K562 (cell line): ENCODE measurements at regions of chr13 and their contacts with region 1.

Region 1: DNA sequence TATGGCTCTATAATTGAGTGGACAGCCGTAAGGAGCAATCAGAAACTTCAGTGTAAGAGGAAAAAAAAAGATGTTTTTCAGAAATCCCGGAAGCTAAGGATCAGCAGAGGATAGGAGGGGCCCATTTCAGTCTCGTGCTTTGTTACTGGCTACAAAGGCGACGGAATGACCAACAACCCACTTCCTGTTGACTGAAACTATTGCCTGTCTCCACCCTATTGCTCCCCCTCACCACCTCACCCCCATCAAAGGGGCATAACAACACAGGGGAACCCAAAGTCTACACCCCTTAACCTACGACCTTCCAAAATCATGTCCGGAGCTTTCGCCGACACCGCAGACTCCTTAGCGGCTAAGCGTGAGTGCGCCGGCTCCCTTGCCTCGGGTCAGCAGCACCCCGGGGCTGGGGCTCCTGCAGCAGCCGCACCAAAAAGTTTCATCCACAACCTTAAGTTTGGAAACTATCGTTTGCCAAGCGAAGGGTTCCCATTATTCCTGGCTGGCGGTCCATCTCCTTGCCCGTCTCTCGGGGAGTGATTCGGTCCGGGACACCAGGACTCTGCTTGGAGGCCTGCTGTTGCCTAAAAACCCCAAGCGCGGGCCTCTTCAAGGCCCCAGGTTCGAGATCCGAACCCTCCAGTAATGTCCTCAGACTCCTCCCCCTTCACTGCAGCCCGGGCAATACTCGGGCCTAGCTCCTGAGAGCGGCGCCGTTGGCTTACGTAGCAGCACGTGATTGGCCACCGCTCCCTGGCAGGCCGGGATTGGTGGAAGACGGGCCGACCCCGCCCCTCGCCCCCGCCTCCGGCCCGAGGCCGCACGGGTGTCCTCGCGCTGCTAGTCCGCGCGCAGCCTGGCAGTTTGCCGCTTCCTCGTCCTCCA is at the start of gene TPP2:
- DNase-seq: peak; percentile 96 to 99 (median 99)
- ATAC-seq: peak; percentile 86
- H3K4me3 ChIP-seq: peak within 1 kb of the TSS; percentile 89
- H3K27ac ChIP-seq: peak within 1 kb of the TSS; percentile 96
- H3K4me1 ChIP-seq: peaks cover 11 to 17% of the 10 kb centered on the region in 2 experiments
- H3K27me3 ChIP-seq: no peaks in the 10 kb centered on the region
- CTCF ChIP-seq: no peak
- EP300 ChIP-seq: 0 out of 2 replicates have a peak, but pooled peaks have one; percentile 4
- POLR2A ChIP-seq: peak; percentile 86
- RAD21 ChIP-seq: no peak
- polyA plus RNA-seq, gene TPP2: 18.8 to 25.8 TPM

Region 2: GRCh38 chr13:102071711-102072110 is 524.7 kb before region 1 on chr13:
- CTCF ChIA-PET with region 1: no interaction called
- POLR2A ChIA-PET with region 1: no interaction called
- in situ Hi-C with region 1: no loop called
- intact Hi-C with region 1: no loop called
- DNase-seq: no peak
- ATAC-seq: no peak
- H3K4me3 ChIP-seq: no peak overlapping the region
- H3K27ac ChIP-seq: no peak overlapping the region
- H3K4me1 ChIP-seq: no peaks in the 10 kb centered on the region
- H3K27me3 ChIP-seq: no peaks in the 10 kb centered on the region
- CTCF ChIP-seq: no peak
- EP300 ChIP-seq: no peak
- POLR2A ChIP-seq: no peak
- RAD21 ChIP-seq: no peak

Region 3: GRCh38 chr13:102236830-102237229 is 359.6 kb before region 1 on chr13:
- CTCF ChIA-PET with region 1: no interaction called
- POLR2A ChIA-PET with region 1: no interaction called
- in situ Hi-C with region 1: no loop called
- intact Hi-C with region 1: no loop called
- DNase-seq: no peak
- ATAC-seq: no peak
- H3K4me3 ChIP-seq: no peak overlapping the region
- H3K27ac ChIP-seq: no peak overlapping the region
- H3K4me1 ChIP-seq: no peaks in the 10 kb centered on the region
- H3K27me3 ChIP-seq: no peaks in the 10 kb centered on the region
- CTCF ChIP-seq: no peak
- EP300 ChIP-seq: no peak
- POLR2A ChIP-seq: no peak
- RAD21 ChIP-seq: no peak

Region 4: DNA sequence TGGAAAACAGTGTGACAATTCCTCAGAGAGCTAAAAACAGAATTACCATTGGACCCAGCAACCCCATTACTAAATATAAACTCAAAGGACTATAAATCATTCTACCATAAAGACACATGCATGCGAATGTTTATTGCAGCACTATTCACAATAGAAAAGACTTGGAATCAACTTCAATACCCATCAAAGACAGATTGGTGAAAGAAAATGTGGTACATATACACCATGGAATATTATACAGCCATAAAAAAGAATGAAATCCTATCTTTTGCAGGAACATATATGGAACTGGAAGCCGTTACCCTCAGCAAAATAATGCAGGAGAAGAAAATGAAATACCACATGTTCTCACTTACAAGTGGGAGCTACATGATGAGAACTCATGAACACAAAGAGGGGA is 173.7 kb before region 1 on chr13:
- CTCF ChIA-PET with region 1: no interaction called
- POLR2A ChIA-PET with region 1: no interaction called
- in situ Hi-C with region 1: no loop called
- intact Hi-C with region 1: no loop called
- DNase-seq: no peak
- ATAC-seq: no peak
- H3K4me3 ChIP-seq: no peak overlapping the region
- H3K27ac ChIP-seq: no peak overlapping the region
- H3K4me1 ChIP-seq: no peaks in the 10 kb centered on the region
- H3K27me3 ChIP-seq: no peaks in the 10 kb centered on the region
- CTCF ChIP-seq: no peak
- EP300 ChIP-seq: no peak
- POLR2A ChIP-seq: no peak
- RAD21 ChIP-seq: no peak

Region 5: GRCh38 chr13:102609696-102610095 is 13.3 kb after region 1 on chr13:
- CTCF ChIA-PET with region 1: no interaction called
- POLR2A ChIA-PET with region 1: interaction called, 21 read pairs
- in situ Hi-C with region 1: no loop called
- intact Hi-C with region 1: no loop called
- DNase-seq: no peak
- ATAC-seq: no peak
- H3K4me3 ChIP-seq: no peak overlapping the region
- H3K27ac ChIP-seq: no peak overlapping the region
- H3K4me1 ChIP-seq: peaks cover 4 to 23% of the 10 kb centered on the region in 2 experiments
- H3K27me3 ChIP-seq: no peaks in the 10 kb centered on the region
- CTCF ChIP-seq: no peak
- EP300 ChIP-seq: no peak
- POLR2A ChIP-seq: no peak
- RAD21 ChIP-seq: no peak

Region 6: GRCh38 chr13:102773441-102774215 is 177.2 kb after region 1 on chr13 and contains the start of gene TEX30:
- CTCF ChIA-PET with region 1: no interaction called
- POLR2A ChIA-PET with region 1: interaction called, 3 read pairs
- in situ Hi-C with region 1: no loop called
- intact Hi-C with region 1: loop called (anchors 2 kb)
- DNase-seq: peak; percentile 83 to 85 (median 84)
- ATAC-seq: peak; percentile 95
- H3K4me3 ChIP-seq: peak within 1 kb of the TSS; percentile 86
- H3K27ac ChIP-seq: peak within 1 kb of the TSS; percentile 88
- H3K4me1 ChIP-seq: peaks cover 13 to 26% of the 10 kb centered on the region in 2 experiments; a peak in 4 of 5 replicates
- H3K27me3 ChIP-seq: no peaks in the 10 kb centered on the region
- CTCF ChIP-seq: no peak
- EP300 ChIP-seq: no peak
- POLR2A ChIP-seq: peak; percentile 84
- RAD21 ChIP-seq: no peak
- polyA plus RNA-seq, gene TEX30: 109 to 143 TPM

Region 7: DNA sequence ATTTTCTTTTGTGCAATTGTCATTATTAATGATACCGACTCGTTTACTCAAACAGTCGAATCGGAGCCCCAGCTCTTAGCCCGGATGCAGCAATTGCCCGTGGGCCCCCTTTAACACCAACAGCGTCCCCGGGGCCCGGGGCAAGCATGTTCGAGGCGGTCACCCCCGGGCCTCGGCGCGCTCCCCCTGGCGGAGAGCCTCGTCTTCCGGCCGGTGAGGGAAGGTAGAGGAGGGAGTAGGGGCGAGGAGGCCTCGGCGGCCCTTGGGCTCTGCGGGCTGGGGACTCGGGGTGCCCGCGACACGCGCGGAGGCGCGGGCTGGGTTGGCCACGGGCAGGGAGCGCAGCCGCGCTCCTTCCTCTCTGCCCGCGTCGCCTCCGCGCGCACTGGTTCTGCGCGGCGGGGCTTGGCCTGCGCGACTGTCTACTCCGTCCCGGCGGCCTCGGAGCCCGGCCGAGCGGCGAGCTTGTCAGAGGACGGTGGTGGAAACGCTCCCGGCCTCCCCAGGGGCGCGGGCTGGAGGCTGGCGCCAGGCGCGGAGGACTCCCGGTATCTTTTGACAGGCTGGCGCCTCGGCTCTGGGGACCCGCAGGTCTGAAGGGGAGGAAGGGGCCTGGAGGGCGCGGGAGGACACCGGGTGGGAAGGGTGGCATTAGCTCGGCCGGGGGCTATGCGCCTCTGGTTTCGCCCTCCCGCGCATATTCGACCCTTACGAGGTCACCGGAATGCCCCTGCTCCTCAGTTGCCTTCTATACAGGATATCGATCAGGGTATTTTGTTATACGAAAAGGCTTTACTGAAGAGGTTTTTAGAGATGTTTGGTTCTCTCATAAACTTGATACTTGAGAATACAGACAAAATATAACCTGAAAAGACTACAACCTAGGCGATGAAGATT is 204.0 kb after region 1 on chr13:
- CTCF ChIA-PET with region 1: no interaction called
- POLR2A ChIA-PET with region 1: no interaction called
- in situ Hi-C with region 1: no loop called
- intact Hi-C with region 1: loop called (anchors 2 kb)
- DNase-seq: peak; percentile 72 to 83 (median 80)
- ATAC-seq: peak; percentile 88
- H3K4me3 ChIP-seq: peak overlapping the region; percentile 76
- H3K27ac ChIP-seq: peak overlapping the region; percentile 76
- H3K4me1 ChIP-seq: peaks cover 4 to 24% of the 10 kb centered on the region in 2 experiments; a peak in 4 of 5 replicates
- H3K27me3 ChIP-seq: no peaks in the 10 kb centered on the region
- CTCF ChIP-seq: peak; percentile 59 to 75 (median 66)
- EP300 ChIP-seq: no peak; the same call in 1 of the 2 replicates
- POLR2A ChIP-seq: peak; percentile 58; the same call in 1 of the 2 replicates
- RAD21 ChIP-seq: peak; percentile 21 to 31; a peak in 2 of 4 replicates